K562 (cell line): ENCODE measurements at regions of chr14 and their contacts with region 1.

Region 1: DNA sequence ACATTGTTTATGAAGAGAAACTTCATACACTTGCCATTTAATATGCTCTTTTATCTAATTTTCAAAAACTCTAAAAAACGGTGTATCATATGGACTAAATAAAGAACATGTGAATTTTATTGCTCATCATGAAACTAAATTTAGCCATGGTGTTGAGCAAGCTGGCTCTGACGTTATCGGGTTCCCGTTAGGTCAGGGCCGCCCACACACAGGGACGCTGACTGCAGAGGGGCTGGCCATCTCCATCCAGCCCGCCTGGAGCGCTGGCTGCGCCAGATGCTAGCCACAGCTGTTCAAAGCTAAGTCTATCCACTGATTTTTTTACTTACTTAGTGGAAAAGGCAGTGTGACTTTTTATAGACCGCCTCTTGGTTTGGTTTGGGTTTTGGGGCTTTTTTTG is 36.5 kb upstream of the DYNC1H1 start:
- DNase-seq: peak; percentile 80 to 89 (median 82)
- ATAC-seq: peak; percentile 97
- H3K4me3 ChIP-seq: no peak overlapping the region
- H3K27ac ChIP-seq: peak overlapping the region; percentile 71
- H3K4me1 ChIP-seq: peaks cover 25 to 34% of the 10 kb centered on the region in 2 experiments; a peak in 4 of 5 replicates
- H3K27me3 ChIP-seq: no peaks in the 10 kb centered on the region
- CTCF ChIP-seq: peak in 1 of 3 experiments; percentile 7; a peak in 1 of 6 replicates
- EP300 ChIP-seq: peak; percentile 72
- POLR2A ChIP-seq: no peak
- RAD21 ChIP-seq: no peak

Region 2: DNA sequence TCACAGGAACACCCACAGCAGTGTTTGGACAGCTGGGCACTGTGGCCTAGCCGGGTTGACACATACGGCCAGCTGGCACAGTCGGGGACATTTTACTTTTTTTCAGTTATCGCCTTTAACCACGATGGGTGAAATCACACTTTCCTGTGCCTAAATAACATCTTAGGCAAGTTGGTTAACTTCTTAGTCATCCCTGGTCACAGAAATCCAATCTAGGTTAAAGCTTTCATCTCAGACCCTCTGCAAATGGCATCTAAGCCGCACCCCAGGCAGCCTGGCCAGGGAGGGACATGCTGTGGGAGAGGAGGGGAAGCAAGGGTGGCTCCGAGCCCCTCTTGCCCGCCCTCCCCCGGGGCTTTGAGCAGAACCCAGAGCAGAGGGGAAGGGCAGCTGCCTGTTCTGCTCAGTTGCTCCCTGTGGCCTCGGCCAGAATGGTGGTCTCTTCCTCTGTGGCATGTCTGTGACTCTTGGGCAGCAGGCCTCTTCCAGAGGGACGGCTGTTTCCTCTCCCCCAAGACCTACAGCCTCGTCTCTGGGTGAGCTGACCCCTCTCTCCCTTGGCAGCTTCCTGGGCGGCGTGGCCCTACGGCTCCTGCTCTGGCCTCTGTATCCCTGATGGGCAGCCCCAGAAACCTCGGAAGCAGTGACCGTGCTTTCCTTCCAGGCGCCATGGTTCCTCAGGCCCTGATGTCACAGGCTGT is 48.9 kb before region 1 on chr14:
- CTCF ChIA-PET with region 1: no interaction called
- POLR2A ChIA-PET with region 1: no interaction called
- in situ Hi-C with region 1: no loop called
- intact Hi-C with region 1: no loop called
- DNase-seq: no peak
- ATAC-seq: no peak
- H3K4me3 ChIP-seq: no peak overlapping the region
- H3K27ac ChIP-seq: no peak overlapping the region
- H3K4me1 ChIP-seq: peaks cover 6 to 9% of the 10 kb centered on the region in 2 experiments; a peak in 3 of 5 replicates
- H3K27me3 ChIP-seq: no peaks in the 10 kb centered on the region
- CTCF ChIP-seq: no peak
- EP300 ChIP-seq: no peak
- POLR2A ChIP-seq: no peak
- RAD21 ChIP-seq: no peak

Region 3: DNA sequence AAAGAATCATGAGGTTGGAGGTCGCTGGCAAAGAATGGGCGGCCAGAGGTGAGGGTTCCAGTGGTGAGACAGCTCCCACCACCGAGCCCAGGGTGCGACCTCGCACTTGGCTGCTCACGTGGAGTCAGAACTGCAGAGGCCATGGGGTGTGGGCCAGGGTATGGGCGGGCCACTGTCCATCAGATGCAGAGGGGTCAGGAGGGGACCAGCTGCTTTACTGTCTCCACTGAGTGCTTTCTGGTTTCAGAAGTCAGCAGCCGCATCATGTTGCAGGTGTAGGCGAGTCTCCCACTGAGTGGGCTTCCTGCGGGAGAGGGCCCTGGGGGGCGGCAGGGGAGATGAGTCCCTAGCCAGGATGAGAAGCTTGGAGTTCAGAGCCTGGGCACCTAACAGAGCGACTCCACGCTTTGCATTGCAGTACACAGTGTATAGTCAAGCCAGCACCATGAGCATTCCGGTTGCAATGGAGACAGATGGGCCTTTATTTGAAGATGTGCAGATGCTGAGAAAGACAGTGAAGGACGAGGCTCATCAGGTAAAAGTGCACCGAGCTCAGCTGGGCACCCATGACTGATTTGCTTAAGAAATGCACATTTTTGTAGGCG is 10.3 kb before region 1 on chr14:
- CTCF ChIA-PET with region 1: no interaction called
- POLR2A ChIA-PET with region 1: interaction called, 10 read pairs
- in situ Hi-C with region 1: no loop called
- intact Hi-C with region 1: no loop called
- DNase-seq: no peak
- ATAC-seq: peak; percentile 53
- H3K4me3 ChIP-seq: no peak overlapping the region
- H3K27ac ChIP-seq: no peak overlapping the region
- H3K4me1 ChIP-seq: peaks cover 0 to 9% of the 10 kb centered on the region in 2 experiments; a peak in 2 of 5 replicates
- H3K27me3 ChIP-seq: no peaks in the 10 kb centered on the region
- CTCF ChIP-seq: no peak
- EP300 ChIP-seq: no peak
- POLR2A ChIP-seq: no peak; the same call in 1 of the 2 replicates
- RAD21 ChIP-seq: no peak

Region 4: GRCh38 chr14:101947906-101948665 is 20.2 kb after region 1 on chr14:
- CTCF ChIA-PET with region 1: no interaction called
- POLR2A ChIA-PET with region 1: interaction called, 10 read pairs
- in situ Hi-C with region 1: no loop called
- intact Hi-C with region 1: no loop called
- DNase-seq: peak; percentile 94 to 99 (median 96)
- ATAC-seq: peak; percentile 99
- H3K4me3 ChIP-seq: peak overlapping the region; percentile 96
- H3K27ac ChIP-seq: peak overlapping the region; percentile 99
- H3K4me1 ChIP-seq: peaks cover 5 to 18% of the 10 kb centered on the region in 2 experiments; a peak in 4 of 5 replicates
- H3K27me3 ChIP-seq: no peaks in the 10 kb centered on the region
- CTCF ChIP-seq: peak in 1 of 3 experiments; percentile 37; a peak in 1 of 6 replicates
- EP300 ChIP-seq: 0 out of 2 replicates have a peak, but pooled peaks have one; percentile 8
- POLR2A ChIP-seq: peak; percentile 97
- RAD21 ChIP-seq: no peak

Region 5: DNA sequence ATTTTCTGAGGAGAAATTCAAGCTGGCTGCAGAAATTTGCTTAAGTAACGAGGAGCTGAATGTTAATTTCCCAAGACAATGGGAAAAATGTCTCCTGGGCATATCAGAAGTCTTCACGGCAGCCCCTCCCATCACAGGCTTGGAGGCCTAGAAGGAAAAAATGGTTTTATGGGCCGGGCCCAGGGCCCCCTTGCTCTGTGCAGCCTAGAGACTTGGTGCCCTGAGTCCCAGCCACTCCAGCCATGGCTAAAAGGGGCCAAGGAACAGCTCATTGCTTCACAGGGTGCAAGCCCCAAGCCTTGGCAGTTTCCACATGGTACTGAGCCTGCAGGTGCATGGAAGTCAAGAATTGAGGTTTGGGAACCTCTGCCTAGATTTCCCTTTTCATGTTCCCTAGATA is 183.2 kb after region 1 on chr14:
- CTCF ChIA-PET with region 1: no interaction called
- POLR2A ChIA-PET with region 1: no interaction called
- in situ Hi-C with region 1: no loop called
- intact Hi-C with region 1: no loop called
- DNase-seq: no peak
- ATAC-seq: no peak
- H3K4me3 ChIP-seq: no peak overlapping the region
- H3K27ac ChIP-seq: no peak overlapping the region
- H3K4me1 ChIP-seq: no peaks in the 10 kb centered on the region
- H3K27me3 ChIP-seq: no peaks in the 10 kb centered on the region
- CTCF ChIP-seq: no peak
- EP300 ChIP-seq: no peak
- POLR2A ChIP-seq: no peak
- RAD21 ChIP-seq: no peak